ENCODE measurements at regions of chr2 and their contacts with region 1.

Region 1: DNA sequence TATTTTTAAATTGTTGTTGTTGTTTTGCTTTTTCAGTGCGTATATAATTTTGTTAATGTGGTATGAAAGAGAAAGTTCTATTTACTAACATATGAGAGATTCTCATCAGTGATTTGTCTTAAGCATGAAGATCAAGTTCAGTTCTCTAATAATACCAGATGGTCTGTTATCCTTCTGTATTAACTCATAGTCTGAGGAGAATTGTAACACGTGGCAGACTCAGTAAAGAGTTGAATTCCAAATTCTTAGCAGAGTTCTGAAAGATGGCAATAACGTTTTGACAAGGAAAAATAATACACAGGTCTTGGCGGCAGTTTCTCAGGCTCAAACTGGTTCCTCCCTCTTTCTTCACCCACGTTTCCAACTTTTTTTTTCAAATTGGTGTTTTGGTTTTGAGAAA is 17.2 kb upstream of the COL3A1 start:
- DNase-seq: no peak
- ATAC-seq: no peak

Region 2: GRCh38 chr2:188369365-188369764 is 587.6 kb before region 1 on chr2:
- intact Hi-C with region 1: no loop called
- DNase-seq: no peak
- ATAC-seq: peak; percentile 67

Region 3: DNA sequence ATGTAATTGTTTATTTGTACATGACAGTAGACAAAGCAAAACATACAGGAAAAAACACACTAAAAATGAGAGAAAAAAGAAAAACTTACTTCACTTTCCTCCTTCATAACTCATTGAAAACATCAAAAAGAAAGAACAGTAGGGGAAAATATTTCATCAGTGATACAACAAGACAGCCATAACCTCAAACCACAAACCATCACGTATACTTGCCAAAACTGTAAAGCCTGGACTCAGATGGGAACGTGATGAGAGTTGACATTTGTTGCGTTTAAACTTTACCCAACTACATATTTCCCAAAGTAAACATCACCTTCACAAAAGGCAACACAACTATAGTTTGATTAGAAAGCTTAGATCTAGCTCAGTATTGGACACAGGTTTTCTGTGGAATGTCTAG is 261.0 kb before region 1 on chr2:
- intact Hi-C with region 1: no loop called
- DNase-seq: no peak
- ATAC-seq: no peak

Region 4: GRCh38 chr2:188909036-188909435 is 47.9 kb before region 1 on chr2:
- intact Hi-C with region 1: loop called (anchors 5 kb)
- DNase-seq: no peak
- ATAC-seq: no peak

Region 5: GRCh38 chr2:188937228-188938220 is 19.4 kb before region 1 on chr2:
- intact Hi-C with region 1: no loop called
- DNase-seq: no peak
- ATAC-seq: peak; percentile 93

Measured in sciatic nerve (tissue), 2 donors.